Activated B cell treated with CpG ODN at 0.5 μM for 24 hours (primary cell): ENCODE measurements at regions of chr12 and their contacts with region 1.

Region 1: GRCh38 chr12:132071040-132071810 is 72.9 kb downstream of the DDX51 start:
- DNase-seq: peak; percentile 35
- ATAC-seq: peak; percentile 75
- H3K4me3 Mint-ChIP-seq: peak overlapping the region; percentile 66
- H3K27ac Mint-ChIP-seq: peak overlapping the region; percentile 90
- H3K4me1 Mint-ChIP-seq: peaks cover 81% of the 10 kb centered on the region
- H3K27me3 Mint-ChIP-seq: no peaks in the 10 kb centered on the region
- CTCF ChIP-seq: no peak

Region 2: DNA sequence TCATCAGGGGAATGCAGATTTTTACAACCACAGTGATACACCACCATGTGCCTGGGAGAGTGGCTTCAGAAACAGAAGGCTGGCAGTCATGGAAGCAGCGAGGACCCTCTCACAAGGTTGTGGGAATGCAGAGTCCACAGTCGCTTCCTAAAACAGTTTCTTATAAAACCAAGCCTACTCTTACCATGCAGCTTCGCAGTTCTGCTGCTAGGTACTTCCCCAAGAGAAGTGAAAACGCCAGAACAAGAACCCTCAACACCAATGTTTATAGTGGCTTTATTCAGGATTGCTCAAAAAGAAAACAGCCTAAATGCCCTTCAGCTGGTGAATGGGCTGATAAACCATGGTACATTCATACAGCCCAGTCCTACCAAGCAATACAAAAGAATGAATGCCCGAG is 14.3 kb before region 1 on chr12:
- CTCF ChIA-PET with region 1: interaction called, 5 read pairs
- POLR2A ChIA-PET with region 1: interaction called, 7 read pairs
- intact Hi-C with region 1: loop called (anchors 1 kb)
- DNase-seq: no peak
- ATAC-seq: peak; percentile 71
- H3K4me3 Mint-ChIP-seq: peak overlapping the region; percentile 24
- H3K27ac Mint-ChIP-seq: peak overlapping the region; percentile 61
- H3K4me1 Mint-ChIP-seq: peaks cover 39% of the 10 kb centered on the region
- H3K27me3 Mint-ChIP-seq: no peaks in the 10 kb centered on the region
- CTCF ChIP-seq: no peak

Region 3: DNA sequence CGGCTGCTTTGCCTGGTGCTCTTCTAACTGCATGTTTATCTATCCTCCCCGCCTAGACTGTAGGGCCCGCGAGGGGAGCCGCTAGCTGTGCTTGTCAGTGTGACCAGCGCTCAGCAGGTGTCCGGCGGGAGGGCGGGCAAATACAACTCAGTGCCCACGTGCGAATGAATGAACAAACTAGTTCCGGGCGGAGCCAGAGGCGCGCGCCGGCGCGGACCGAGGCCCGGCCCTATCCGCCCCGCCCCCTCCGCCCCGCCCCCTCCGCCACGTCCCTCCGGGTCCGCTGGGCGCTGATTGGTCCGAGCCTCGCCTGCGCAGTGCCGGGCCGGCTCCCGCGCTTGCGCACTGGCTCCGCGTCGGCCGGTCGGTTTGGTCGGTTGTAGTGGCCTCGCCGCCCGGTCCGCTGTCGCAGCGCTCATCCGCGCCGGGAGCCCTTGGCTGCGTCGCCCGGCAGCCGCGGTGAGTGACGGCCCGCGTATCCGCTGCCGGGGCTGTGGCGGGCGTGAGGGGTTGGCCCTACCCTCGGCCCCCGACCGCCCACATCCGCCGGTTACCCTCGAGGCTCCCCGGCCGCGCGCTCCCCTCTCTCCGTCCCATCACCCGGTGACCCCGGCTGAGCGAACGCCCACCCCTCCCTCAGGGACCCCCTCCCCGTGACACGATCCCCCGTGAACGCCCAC is 12.9 kb after region 1 on chr12:
- CTCF ChIA-PET with region 1: no interaction called
- POLR2A ChIA-PET with region 1: interaction called, 3 read pairs
- intact Hi-C with region 1: loop called (anchors 1 kb)
- DNase-seq: peak; percentile 88
- ATAC-seq: peak; percentile 93
- H3K4me3 Mint-ChIP-seq: peak overlapping the region; percentile 90
- H3K27ac Mint-ChIP-seq: peak overlapping the region; percentile 88
- H3K4me1 Mint-ChIP-seq: peaks cover 22% of the 10 kb centered on the region
- H3K27me3 Mint-ChIP-seq: no peaks in the 10 kb centered on the region
- CTCF ChIP-seq: no peak

Region 4: GRCh38 chr12:132144115-132144812 is 73.0 kb after region 1 on chr12 and contains the starts of genes DDX51 and NOC4L:
- CTCF ChIA-PET with region 1: no interaction called
- POLR2A ChIA-PET with region 1: interaction called, 7 read pairs
- intact Hi-C with region 1: loop called (anchors 1 kb)
- DNase-seq: peak; percentile 99
- ATAC-seq: peak; percentile 93
- H3K4me3 Mint-ChIP-seq: peak within 1 kb of the TSS; percentile 91
- H3K27ac Mint-ChIP-seq: peak within 1 kb of the TSS; percentile 94
- H3K4me1 Mint-ChIP-seq: peaks cover 35% of the 10 kb centered on the region
- H3K27me3 Mint-ChIP-seq: no peaks in the 10 kb centered on the region
- CTCF ChIP-seq: no peak
- total RNA-seq, gene DDX51: 39.9 and 43.0 TPM in 2 replicates
- total RNA-seq, gene NOC4L: 28.1 and 29.1 TPM in 2 replicates

Region 5: GRCh38 chr12:132154341-132154761 is 83.1 kb after region 1 on chr12:
- CTCF ChIA-PET with region 1: no interaction called
- POLR2A ChIA-PET with region 1: no interaction called
- intact Hi-C with region 1: no loop called
- DNase-seq: no peak
- ATAC-seq: no peak
- H3K4me3 Mint-ChIP-seq: no peak overlapping the region
- H3K27ac Mint-ChIP-seq: no peak overlapping the region
- H3K4me1 Mint-ChIP-seq: peaks cover 2% of the 10 kb centered on the region
- H3K27me3 Mint-ChIP-seq: no peaks in the 10 kb centered on the region
- CTCF ChIP-seq: no peak

Region 6: GRCh38 chr12:132445884-132446632 is 374.8 kb after region 1 on chr12:
- CTCF ChIA-PET with region 1: no interaction called
- POLR2A ChIA-PET with region 1: no interaction called
- intact Hi-C with region 1: loop called (anchors 10 kb)
- DNase-seq: no peak
- ATAC-seq: peak; percentile 9
- H3K4me3 Mint-ChIP-seq: peak overlapping the region; percentile 66
- H3K27ac Mint-ChIP-seq: peak overlapping the region; percentile 98
- H3K4me1 Mint-ChIP-seq: peaks cover 63% of the 10 kb centered on the region
- H3K27me3 Mint-ChIP-seq: no peaks in the 10 kb centered on the region
- CTCF ChIP-seq: no peak